ENCODE measurements at regions of chr9 and their contacts with region 1.

Region 1: GRCh38 chr9:137200311-137201204 is at the start of gene TPRN:
- DNase-seq: peak; percentile 100
- ATAC-seq: peak; percentile 97
- H3K4me3 Mint-ChIP-seq: peak within 1 kb of the TSS; percentile 84
- H3K27ac Mint-ChIP-seq: peak within 1 kb of the TSS; percentile 91
- H3K4me1 Mint-ChIP-seq: peaks cover 33% of the 10 kb centered on the region
- H3K27me3 Mint-ChIP-seq: no peaks in the 10 kb centered on the region
- CTCF ChIP-seq: no peak
- total RNA-seq, gene TPRN: 33.4 to 43.1 TPM (median 38.1 TPM) in 3 replicates

Region 2: GRCh38 chr9:137162505-137163100 is 38.0 kb before region 1 on chr9:
- CTCF ChIA-PET with region 1: no interaction called
- POLR2A ChIA-PET with region 1: no interaction called
- DNase-seq: peak; percentile 54
- ATAC-seq: peak; percentile 12
- H3K4me3 Mint-ChIP-seq: peak overlapping the region; percentile 60
- H3K27ac Mint-ChIP-seq: no peak overlapping the region
- H3K4me1 Mint-ChIP-seq: no peaks in the 10 kb centered on the region
- H3K27me3 Mint-ChIP-seq: peaks cover 85% of the 10 kb centered on the region
- CTCF ChIP-seq: no peak

Region 3: GRCh38 chr9:137188490-137189296 is 11.9 kb before region 1 on chr9 and contains the starts of genes ANAPC2 and SSNA1:
- CTCF ChIA-PET with region 1: interaction called, 23 read pairs
- POLR2A ChIA-PET with region 1: interaction called, 13 read pairs
- DNase-seq: peak; percentile 92
- ATAC-seq: peak; percentile 84
- H3K4me3 Mint-ChIP-seq: peak within 1 kb of the TSS; percentile 92
- H3K27ac Mint-ChIP-seq: peak within 1 kb of the TSS; percentile 94
- H3K4me1 Mint-ChIP-seq: peaks cover 20% of the 10 kb centered on the region
- H3K27me3 Mint-ChIP-seq: no peaks in the 10 kb centered on the region; the same call in 1 of the 2 replicates
- CTCF ChIP-seq: no peak
- total RNA-seq, gene ANAPC2: 61.0 to 80.9 TPM (median 61.2 TPM) in 3 replicates
- total RNA-seq, gene SSNA1: 102 to 105 TPM (median 103 TPM) in 3 replicates